OCI-LY7 (cell line): ENCODE measurements at regions of chr1 and their contacts with region 1.

Region 1: DNA sequence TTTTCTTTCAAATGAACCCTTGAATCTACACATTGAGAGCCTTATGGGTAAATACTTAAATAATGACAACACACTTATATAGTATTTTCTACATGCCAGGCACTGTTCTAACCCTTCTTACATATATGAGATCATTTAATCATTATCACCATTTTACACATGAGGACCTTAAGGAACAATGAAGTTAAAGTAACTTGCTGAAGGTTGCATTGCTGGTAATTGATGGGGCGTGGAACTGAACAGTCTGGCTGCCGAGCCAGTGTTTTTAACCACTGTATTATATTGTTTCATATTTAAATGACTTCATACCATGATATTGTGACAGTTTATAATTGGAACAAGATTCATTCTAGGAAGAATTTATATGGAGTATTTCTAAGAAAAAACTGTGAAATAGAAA is 111.9 kb upstream of the TENT5C start:
- DNase-seq: no peak
- H3K4me3 ChIP-seq: no peak overlapping the region
- H3K27ac ChIP-seq: no peak overlapping the region
- H3K4me1 ChIP-seq: no peaks in the 10 kb centered on the region
- CTCF ChIP-seq: no peak

Region 2: GRCh38 chr1:117388328-117388727 is 105.6 kb before region 1 on chr1:
- CTCF ChIA-PET with region 1: no interaction called
- POLR2A ChIA-PET with region 1: no interaction called
- intact Hi-C with region 1: no loop called
- DNase-seq: no peak
- H3K4me3 ChIP-seq: no peak overlapping the region
- H3K27ac ChIP-seq: no peak overlapping the region
- H3K4me1 ChIP-seq: peaks cover 9% of the 10 kb centered on the region
- CTCF ChIP-seq: no peak

Region 3: DNA sequence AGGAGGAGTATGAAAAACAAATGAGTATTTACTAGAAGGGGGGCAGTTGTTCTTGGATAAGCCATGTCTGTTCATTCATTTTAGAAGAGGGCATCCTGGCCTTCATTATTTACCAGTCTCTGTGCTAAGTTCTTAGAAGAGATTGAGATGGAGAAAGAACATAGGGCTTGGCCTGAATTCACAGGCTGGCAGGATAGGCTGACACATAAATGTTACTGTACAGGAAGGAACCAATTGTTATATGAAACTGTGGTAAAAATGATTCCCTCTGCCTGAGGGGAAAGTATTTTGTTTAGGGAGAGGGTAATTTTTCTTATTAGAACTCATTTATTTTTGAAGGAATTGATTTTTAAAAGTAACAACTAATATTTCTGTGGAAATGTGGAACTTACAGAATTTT is 27.1 kb before region 1 on chr1:
- CTCF ChIA-PET with region 1: no interaction called
- POLR2A ChIA-PET with region 1: no interaction called
- intact Hi-C with region 1: loop called (anchors 2 kb)
- DNase-seq: no peak
- H3K4me3 ChIP-seq: no peak overlapping the region
- H3K27ac ChIP-seq: no peak overlapping the region
- H3K4me1 ChIP-seq: no peaks in the 10 kb centered on the region
- CTCF ChIP-seq: no peak